ENCODE measurements at regions of chr20 and their contacts with region 1.

Region 1: DNA sequence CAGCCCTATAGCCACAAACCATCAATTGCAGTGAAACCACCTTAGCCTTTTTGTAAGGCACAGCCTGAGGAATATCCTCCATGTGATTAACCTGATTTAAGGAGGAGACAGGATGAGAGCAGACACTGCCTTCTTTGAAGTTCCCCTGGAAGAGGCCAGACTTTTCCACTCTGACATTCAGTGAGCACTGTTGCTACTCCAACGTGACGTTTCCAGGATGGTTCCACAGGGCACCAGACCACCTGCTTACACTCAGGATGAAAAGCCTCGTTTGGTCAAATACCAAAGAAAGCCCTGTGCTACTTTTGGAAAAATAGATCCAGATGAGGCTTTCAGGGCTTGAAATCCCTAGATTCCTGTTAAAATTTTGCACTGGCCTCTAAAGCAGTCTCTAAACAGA is 1102.1 kb upstream of the FLRT3 start:
- DNase-seq: no peak
- H3K4me3 ChIP-seq: no peak overlapping the region
- H3K27me3 ChIP-seq: no peaks in the 10 kb centered on the region
- CTCF ChIP-seq: no peak

Region 2: DNA sequence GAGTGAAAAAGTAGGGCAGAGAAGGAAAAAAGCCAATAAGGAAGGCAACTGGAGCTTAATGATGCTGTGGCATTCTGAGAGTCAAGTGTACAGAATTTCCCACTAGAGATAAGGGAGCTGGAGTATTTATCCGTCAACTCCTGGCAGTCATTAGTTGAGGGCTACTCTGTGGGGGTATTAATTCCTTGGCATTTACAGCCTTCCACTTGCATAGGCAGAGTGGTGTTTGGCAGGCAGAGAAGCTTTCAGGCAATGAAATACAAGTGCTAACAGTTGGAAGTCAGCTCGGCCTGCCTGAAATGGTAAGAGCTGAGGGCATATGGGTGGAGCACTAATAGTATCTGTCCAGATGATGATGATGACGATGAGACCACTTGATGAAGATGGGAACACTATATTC is 894.9 kb before region 1 on chr20:
- CTCF ChIA-PET with region 1: no interaction called
- POLR2A ChIA-PET with region 1: interaction called, 10 read pairs
- DNase-seq: no peak
- H3K4me3 ChIP-seq: no peak overlapping the region
- H3K27me3 ChIP-seq: no peaks in the 10 kb centered on the region
- CTCF ChIP-seq: no peak

Measured in BJ (cell line).